Heart right ventricle (tissue), 16 donors: ENCODE measurements at regions of chr16 and their contacts with region 1.

Region 1: GRCh38 chr16:82263521-82264143 is 93.6 kb upstream of the MPHOSPH6 start:
- DNase-seq: peak; percentile 19 to 58
- ATAC-seq: peak; percentile 83 to 96 (median 88)
- H3K4me3 ChIP-seq: no peak overlapping the region
- H3K27ac ChIP-seq: no peak overlapping the region
- H3K4me1 ChIP-seq: peaks cover 0 to 17% (median 0%) of the 10 kb centered on the region in 9 donors
- H3K27me3 ChIP-seq: peaks cover 0 to 4% (median 0%) of the 10 kb centered on the region in 7 donors
- CTCF ChIP-seq: peak; percentile 82 to 96 (median 92)

Region 2: DNA sequence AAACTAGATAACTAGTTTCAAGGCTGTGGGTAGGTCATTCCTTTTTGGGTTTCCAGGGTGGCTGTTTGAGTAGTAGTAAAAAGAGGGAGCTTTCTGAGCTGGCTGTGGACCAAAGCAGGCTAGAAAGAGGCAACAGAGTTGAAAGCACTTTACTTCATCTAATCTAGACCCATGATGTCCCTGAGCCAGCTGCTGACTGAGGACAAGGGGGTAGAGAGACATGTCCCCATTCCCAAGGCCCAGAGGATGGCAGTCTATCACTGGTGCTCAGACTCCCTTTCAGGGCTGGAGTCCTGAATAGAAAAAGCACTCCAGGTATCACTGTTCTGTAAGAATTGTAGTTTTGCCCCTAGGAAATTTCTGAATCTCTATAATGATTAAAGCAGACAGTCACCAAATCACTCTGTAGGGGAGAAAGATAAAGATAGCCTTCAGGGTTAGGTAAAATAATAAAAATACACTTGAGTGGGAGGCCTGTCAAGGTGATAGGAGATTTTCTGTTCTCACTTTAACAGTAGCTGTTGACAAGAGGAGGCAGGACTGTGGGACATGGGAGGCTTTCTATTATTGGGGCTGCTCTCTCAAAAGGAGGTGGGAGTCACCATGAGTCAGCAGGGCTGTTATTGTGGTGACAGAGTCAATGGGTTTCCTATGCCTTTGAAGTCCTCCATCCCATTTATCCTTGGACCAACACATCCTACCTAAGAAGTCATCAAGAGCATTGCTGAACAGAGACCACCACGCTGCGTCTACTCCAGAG is 96.6 kb after region 1 on chr16:
- intact Hi-C with region 1: loop called in 1 of 10 experiments (anchors 5 kb)
- DNase-seq: no peak
- ATAC-seq: peak in 5 of 8 donors; percentile 35 to 82 (median 56)
- H3K4me3 ChIP-seq: no peak overlapping the region
- H3K27ac ChIP-seq: no peak overlapping the region
- H3K4me1 ChIP-seq: peaks cover 0 to 4% (median 0%) of the 10 kb centered on the region in 9 donors
- H3K27me3 ChIP-seq: no peaks in the 10 kb centered on the region
- CTCF ChIP-seq: no peak

Region 3: DNA sequence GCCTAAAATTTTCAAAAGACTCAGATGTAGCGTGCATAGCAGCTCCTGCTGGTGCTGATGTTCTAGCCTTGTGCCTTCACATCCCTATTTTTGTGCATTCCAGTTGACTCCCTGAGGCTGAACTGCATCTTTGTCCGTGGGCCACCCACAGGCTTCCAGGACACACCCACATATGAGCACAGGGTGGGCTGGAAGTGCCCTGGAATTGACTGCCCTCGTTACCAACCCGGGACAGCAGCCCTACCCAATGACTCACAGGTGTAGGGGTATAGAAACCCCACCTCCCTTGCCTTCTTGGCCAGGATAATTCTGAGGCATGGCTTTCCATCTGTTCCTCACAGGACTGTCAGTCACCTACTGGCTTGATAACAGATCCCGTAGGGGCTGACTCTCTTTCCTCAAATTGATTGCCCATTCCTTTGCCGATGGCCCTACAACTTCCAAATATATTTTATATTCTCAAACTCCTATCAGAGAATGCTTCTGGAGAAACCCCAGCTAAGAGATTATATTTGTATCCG is 297.2 kb after region 1 on chr16:
- intact Hi-C with region 1: loop called in 1 of 10 experiments (anchors 10 kb)
- DNase-seq: no peak
- ATAC-seq: no peak
- H3K4me3 ChIP-seq: no peak overlapping the region
- H3K27ac ChIP-seq: no peak overlapping the region
- H3K4me1 ChIP-seq: no peaks in the 10 kb centered on the region
- H3K27me3 ChIP-seq: no peaks in the 10 kb centered on the region
- CTCF ChIP-seq: no peak

Region 4: GRCh38 chr16:83215406-83216001 is 951.9 kb after region 1 on chr16:
- intact Hi-C with region 1: loop called in 1 of 10 experiments (anchors 5 kb)
- DNase-seq: peak in 1 of 2 donors; percentile 18
- ATAC-seq: no peak
- H3K4me3 ChIP-seq: no peak overlapping the region
- H3K27ac ChIP-seq: no peak overlapping the region
- H3K4me1 ChIP-seq: peaks cover 0 to 8% (median 0%) of the 10 kb centered on the region in 9 donors
- H3K27me3 ChIP-seq: no peaks in the 10 kb centered on the region
- CTCF ChIP-seq: peak; percentile 27 to 67 (median 43)

Region 5: GRCh38 chr16:83449861-83450260 is 1186.2 kb after region 1 on chr16:
- intact Hi-C with region 1: loop called in 4 of 10 experiments (anchors 5 to 10 kb)
- DNase-seq: no peak
- ATAC-seq: no peak
- H3K4me3 ChIP-seq: no peak overlapping the region
- H3K27ac ChIP-seq: no peak overlapping the region
- H3K4me1 ChIP-seq: no peaks in the 10 kb centered on the region
- H3K27me3 ChIP-seq: no peaks in the 10 kb centered on the region
- CTCF ChIP-seq: no peak